Left cardiac atrium (tissue), 4 donors: ENCODE measurements at regions of chr2 and their contacts with region 1.

Region 1: GRCh38 chr2:76599732-76600368 is 889.1 kb upstream of the GCFC2 start:
- DNase-seq: peak; percentile 26
- ATAC-seq: peak; percentile 62 to 73

Region 2: DNA sequence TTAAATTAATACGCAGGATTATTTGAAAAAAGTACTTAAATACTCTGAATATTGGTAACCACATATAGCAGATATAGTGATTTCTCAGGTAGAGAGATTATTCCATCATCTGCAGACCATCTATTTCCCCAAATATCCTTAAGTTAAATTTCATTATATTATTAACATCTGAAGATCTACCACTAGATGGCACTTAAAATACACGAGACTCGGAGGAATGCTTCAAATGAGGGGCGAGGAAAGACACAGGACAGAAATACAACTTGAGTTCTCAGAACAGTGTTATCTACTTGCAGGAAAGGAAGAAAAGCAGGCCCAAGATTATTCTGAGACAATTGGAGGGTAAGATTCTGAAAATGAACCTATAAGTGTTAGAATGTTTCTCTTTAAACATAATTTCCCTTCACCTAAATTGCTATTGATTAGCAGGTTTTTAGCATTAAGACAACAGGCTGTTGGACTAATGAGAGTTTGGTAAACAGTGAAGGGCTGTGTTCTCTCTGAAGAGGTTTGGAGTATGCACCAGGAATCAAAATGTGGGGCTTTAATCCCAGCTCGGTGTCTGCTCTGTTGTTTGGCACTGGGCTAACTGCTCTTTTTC is 812.2 kb before region 1 on chr2:
- intact Hi-C with region 1: loop called in 1 of 2 experiments (anchors 5 kb)
- DNase-seq: no peak
- ATAC-seq: no peak

Region 3: GRCh38 chr2:76197842-76198448 is 401.9 kb before region 1 on chr2:
- intact Hi-C with region 1: loop called in 1 of 2 experiments (anchors 5 kb)
- DNase-seq: peak; percentile 43
- ATAC-seq: no peak

Region 4: GRCh38 chr2:76281156-76281841 is 318.6 kb before region 1 on chr2:
- intact Hi-C with region 1: no loop called
- DNase-seq: no peak
- ATAC-seq: no peak

Region 5: DNA sequence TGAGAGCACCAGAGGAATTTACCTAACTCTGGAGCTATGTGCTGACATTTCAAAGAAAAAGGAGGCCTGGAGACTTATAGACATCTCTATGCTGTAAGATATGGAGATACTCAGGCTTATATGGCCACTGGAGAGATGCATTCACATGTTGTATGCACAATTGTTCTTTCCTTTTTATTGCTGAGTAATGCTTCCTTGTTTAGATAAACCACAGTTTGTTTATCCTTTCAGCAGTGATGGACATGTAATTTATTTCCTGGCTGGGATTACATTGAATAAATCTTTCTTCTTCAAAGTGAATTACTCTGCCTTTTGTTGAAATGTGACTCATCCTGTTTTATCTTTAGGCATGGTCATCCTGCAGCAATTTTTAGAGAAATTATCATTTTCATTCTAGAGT is 172.4 kb before region 1 on chr2:
- intact Hi-C with region 1: no loop called
- DNase-seq: no peak
- ATAC-seq: no peak